ENCODE measurements at regions of chr10 and their contacts with region 1.

Region 1: GRCh38 chr10:80964955-80965614 is 427.4 kb downstream of the SH2D4B start:
- DNase-seq: no peak
- H3K4me3 ChIP-seq: no peak overlapping the region
- H3K27ac ChIP-seq: no peak overlapping the region
- H3K4me1 ChIP-seq: no peaks in the 10 kb centered on the region
- H3K27me3 ChIP-seq: no peaks in the 10 kb centered on the region
- CTCF ChIP-seq: no peak
- EP300 ChIP-seq: no peak
- POLR2A ChIP-seq: no peak

Region 2: GRCh38 chr10:79995979-79996634 is 969.0 kb before region 1 on chr10:
- in situ Hi-C with region 1: no loop called
- intact Hi-C with region 1: loop called (anchors 10 kb)
- DNase-seq: no peak
- H3K4me3 ChIP-seq: no peak overlapping the region
- H3K27ac ChIP-seq: no peak overlapping the region
- H3K4me1 ChIP-seq: no peaks in the 10 kb centered on the region
- H3K27me3 ChIP-seq: no peaks in the 10 kb centered on the region
- CTCF ChIP-seq: no peak
- EP300 ChIP-seq: no peak
- POLR2A ChIP-seq: no peak

Measured in transverse colon (tissue), 4 donors.